ENCODE measurements at regions of chr19 and their contacts with region 1.

Region 1: DNA sequence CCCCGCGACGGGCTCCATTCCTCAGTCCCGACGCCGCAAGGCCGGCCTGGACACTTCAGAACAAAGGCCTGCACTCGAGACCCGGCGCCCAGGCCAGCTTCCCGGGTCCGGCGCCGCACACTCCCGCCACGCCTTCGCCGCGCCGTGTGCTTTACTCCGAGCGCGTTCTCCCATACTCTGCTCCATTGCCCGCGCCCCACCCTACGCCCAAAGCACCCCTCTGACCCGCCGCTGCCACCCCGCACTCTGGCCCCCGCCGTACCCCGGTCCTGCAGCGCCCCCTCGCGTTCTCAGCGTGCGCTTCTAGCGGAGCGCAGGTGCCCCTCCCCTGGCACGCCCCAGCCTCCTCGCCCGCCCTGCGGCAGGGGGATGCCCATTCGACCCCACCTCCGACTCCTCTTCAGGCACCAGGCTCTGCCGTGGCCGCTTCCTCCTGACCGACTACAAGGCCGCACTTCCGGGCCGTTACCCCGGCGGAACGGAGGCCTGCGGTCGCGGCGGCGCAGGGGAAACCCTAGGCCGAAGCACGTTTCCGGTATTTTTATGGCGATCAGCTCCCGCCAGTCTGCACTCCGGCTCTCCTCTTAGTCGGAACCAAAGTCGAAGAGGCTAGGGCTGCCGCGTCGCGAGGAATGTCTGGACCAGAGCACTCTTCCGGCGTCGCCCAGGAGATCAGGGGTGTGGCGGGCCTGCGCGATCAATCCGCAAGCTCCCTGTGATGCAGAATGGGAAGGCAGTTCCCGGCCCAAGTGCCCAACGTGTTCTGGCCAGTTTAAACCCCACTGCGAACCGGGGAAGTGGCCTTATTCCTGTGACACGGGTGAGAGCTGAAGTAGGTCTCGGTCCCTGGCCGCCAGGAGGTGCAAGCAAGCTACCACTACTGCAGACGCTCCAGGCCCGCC is at the start of gene ZBTB45:
- DNase-seq: peak; percentile 88 to 92 (median 89)
- H3K4me3 ChIP-seq: peak within 1 kb of the TSS; percentile 81 to 88
- H3K4me3 Mint-ChIP-seq: peak within 1 kb of the TSS; percentile 92 to 97 (median 95)
- H3K27ac ChIP-seq: peak within 1 kb of the TSS; percentile 82
- H3K27ac Mint-ChIP-seq: peak within 1 kb of the TSS; percentile 97 to 99 (median 98)
- H3K4me1 ChIP-seq: peaks cover 28% of the 10 kb centered on the region
- H3K4me1 Mint-ChIP-seq: peaks cover 14 to 53% (median 30%) of the 10 kb centered on the region in 4 donors
- H3K27me3 ChIP-seq: no peaks in the 10 kb centered on the region
- H3K27me3 Mint-ChIP-seq: no peaks in the 10 kb centered on the region
- total RNA-seq, gene ZBTB45: 19.8 TPM

Region 2: GRCh38 chr19:58395220-58396029 is 124.2 kb before region 1 on chr19 and contains the start of gene RNF225:
- CTCF ChIA-PET with region 1: no interaction called
- POLR2A ChIA-PET with region 1: no interaction called
- intact Hi-C with region 1: no loop called
- DNase-seq: no peak
- H3K4me3 ChIP-seq: no peak within 1 kb of the TSS
- H3K4me3 Mint-ChIP-seq: peak within 1 kb of the TSS in 1 of 8 donors; percentile 66
- H3K27ac ChIP-seq: no peak within 1 kb of the TSS
- H3K27ac Mint-ChIP-seq: peak within 1 kb of the TSS in 1 of 7 donors; percentile 14
- H3K4me1 ChIP-seq: peaks cover 11% of the 10 kb centered on the region
- H3K4me1 Mint-ChIP-seq: peaks cover 6 to 26% (median 12%) of the 10 kb centered on the region in 4 donors
- H3K27me3 ChIP-seq: peaks cover 11% of the 10 kb centered on the region
- H3K27me3 Mint-ChIP-seq: peaks cover 5 to 7% of the 10 kb centered on the region in 2 donors
- total RNA-seq, gene RNF225: 0.47 TPM in 1 of 2 experiments, not detected in the other

Region 3: DNA sequence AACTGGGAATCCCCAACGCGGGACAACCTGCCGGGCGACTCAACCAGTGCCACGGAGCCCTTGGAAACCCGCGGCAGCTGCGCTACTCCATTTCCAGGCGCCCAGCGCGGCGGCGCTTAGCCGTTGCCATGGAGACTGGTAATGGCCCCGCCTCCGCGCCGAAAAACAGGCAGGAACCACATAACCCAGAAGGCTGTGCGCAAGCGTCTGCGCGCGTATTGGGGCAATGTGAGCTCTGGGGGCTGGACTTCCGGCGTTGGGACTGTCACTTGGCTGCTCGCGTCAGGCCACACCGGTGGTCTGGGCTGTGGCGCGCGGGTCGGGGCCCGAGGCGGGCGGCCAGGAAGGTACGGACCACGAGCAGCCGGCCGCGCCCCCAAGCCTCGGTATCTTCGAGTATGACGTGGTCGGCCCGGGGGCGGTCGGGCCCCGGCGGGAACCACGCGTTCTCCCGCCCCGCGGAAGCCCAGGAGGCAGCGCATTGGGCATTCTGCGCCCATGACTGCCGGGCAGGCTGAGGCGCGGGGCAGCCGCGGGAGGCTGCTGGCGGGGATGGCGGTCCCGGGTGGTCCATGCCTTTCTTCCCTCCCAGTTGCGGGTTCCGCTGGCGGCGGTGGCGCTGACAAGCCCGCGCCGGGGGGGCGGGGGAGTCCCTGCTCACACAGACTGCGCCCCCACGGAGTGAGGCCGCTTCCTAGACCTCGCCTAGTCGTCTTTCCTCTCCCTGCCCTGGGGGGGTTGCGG is 68.1 kb before region 1 on chr19 and contains the start of gene ZNF324B:
- CTCF ChIA-PET with region 1: interaction called, 3 read pairs
- POLR2A ChIA-PET with region 1: interaction called, 11 read pairs
- intact Hi-C with region 1: no loop called
- DNase-seq: peak; percentile 96 to 97 (median 96)
- H3K4me3 ChIP-seq: peak within 1 kb of the TSS; percentile 60 to 69
- H3K4me3 Mint-ChIP-seq: peak within 1 kb of the TSS; percentile 85 to 93 (median 88)
- H3K27ac ChIP-seq: peak within 1 kb of the TSS; percentile 67
- H3K27ac Mint-ChIP-seq: peak within 1 kb of the TSS; percentile 67 to 93 (median 84)
- H3K4me1 ChIP-seq: peaks cover 7% of the 10 kb centered on the region
- H3K4me1 Mint-ChIP-seq: peaks cover 13 to 31% (median 19%) of the 10 kb centered on the region in 4 donors
- H3K27me3 ChIP-seq: no peaks in the 10 kb centered on the region
- H3K27me3 Mint-ChIP-seq: peaks cover 6 to 11% of the 10 kb centered on the region in 2 donors
- total RNA-seq, gene ZNF324B: 13.1 to 13.7 TPM

Region 4: GRCh38 chr19:58538257-58539168 is 18.9 kb after region 1 on chr19:
- CTCF ChIA-PET with region 1: interaction called, 13 read pairs
- POLR2A ChIA-PET with region 1: interaction called, 96 read pairs
- intact Hi-C with region 1: no loop called
- DNase-seq: peak in 2 of 5 donors; percentile 33 to 36
- H3K4me3 ChIP-seq: peak overlapping the region in 1 of 2 donors; percentile 37
- H3K4me3 Mint-ChIP-seq: peak overlapping the region; percentile 41 to 79 (median 66)
- H3K27ac ChIP-seq: no peak overlapping the region
- H3K27ac Mint-ChIP-seq: peak overlapping the region in 5 of 7 donors; percentile 47 to 91 (median 72)
- H3K4me1 ChIP-seq: peaks cover 15% of the 10 kb centered on the region
- H3K4me1 Mint-ChIP-seq: peaks cover 3 to 11% (median 5%) of the 10 kb centered on the region in 4 donors
- H3K27me3 ChIP-seq: no peaks in the 10 kb centered on the region
- H3K27me3 Mint-ChIP-seq: peaks cover 0 to 10% of the 10 kb centered on the region in 2 donors

Region 5: GRCh38 chr19:58558623-58559274 is 39.1 kb after region 1 on chr19:
- CTCF ChIA-PET with region 1: interaction called, 28 read pairs
- POLR2A ChIA-PET with region 1: interaction called, 86 read pairs
- intact Hi-C with region 1: loop called (anchors 1 kb)
- DNase-seq: peak; percentile 99 to 100 (median 100)
- H3K4me3 ChIP-seq: peak overlapping the region; percentile 47 to 100
- H3K4me3 Mint-ChIP-seq: peak overlapping the region; percentile 92 to 98 (median 97)
- H3K27ac ChIP-seq: peak overlapping the region; percentile 99
- H3K27ac Mint-ChIP-seq: peak overlapping the region; percentile 97 to 99 (median 99)
- H3K4me1 ChIP-seq: peaks cover 79% of the 10 kb centered on the region
- H3K4me1 Mint-ChIP-seq: peaks cover 28 to 96% (median 61%) of the 10 kb centered on the region in 4 donors
- H3K27me3 ChIP-seq: no peaks in the 10 kb centered on the region
- H3K27me3 Mint-ChIP-seq: no peaks in the 10 kb centered on the region

Region 6: GRCh38 chr19:58581227-58582151 is 61.9 kb after region 1 on chr19:
- CTCF ChIA-PET with region 1: interaction called, 260 read pairs
- POLR2A ChIA-PET with region 1: interaction called, 46 read pairs
- intact Hi-C with region 1: loop called (anchors 1 kb)
- DNase-seq: peak; percentile 87 to 91 (median 88)
- H3K4me3 ChIP-seq: no peak overlapping the region
- H3K4me3 Mint-ChIP-seq: peak overlapping the region in 1 of 8 donors; percentile 26
- H3K27ac ChIP-seq: no peak overlapping the region
- H3K27ac Mint-ChIP-seq: peak overlapping the region; percentile 55 to 94 (median 87)
- H3K4me1 ChIP-seq: no peaks in the 10 kb centered on the region
- H3K4me1 Mint-ChIP-seq: peaks cover 17 to 42% (median 27%) of the 10 kb centered on the region in 4 donors
- H3K27me3 ChIP-seq: no peaks in the 10 kb centered on the region
- H3K27me3 Mint-ChIP-seq: no peaks in the 10 kb centered on the region